K562 (cell line): ENCODE measurements at regions of chr20 and their contacts with region 1.

Region 1: DNA sequence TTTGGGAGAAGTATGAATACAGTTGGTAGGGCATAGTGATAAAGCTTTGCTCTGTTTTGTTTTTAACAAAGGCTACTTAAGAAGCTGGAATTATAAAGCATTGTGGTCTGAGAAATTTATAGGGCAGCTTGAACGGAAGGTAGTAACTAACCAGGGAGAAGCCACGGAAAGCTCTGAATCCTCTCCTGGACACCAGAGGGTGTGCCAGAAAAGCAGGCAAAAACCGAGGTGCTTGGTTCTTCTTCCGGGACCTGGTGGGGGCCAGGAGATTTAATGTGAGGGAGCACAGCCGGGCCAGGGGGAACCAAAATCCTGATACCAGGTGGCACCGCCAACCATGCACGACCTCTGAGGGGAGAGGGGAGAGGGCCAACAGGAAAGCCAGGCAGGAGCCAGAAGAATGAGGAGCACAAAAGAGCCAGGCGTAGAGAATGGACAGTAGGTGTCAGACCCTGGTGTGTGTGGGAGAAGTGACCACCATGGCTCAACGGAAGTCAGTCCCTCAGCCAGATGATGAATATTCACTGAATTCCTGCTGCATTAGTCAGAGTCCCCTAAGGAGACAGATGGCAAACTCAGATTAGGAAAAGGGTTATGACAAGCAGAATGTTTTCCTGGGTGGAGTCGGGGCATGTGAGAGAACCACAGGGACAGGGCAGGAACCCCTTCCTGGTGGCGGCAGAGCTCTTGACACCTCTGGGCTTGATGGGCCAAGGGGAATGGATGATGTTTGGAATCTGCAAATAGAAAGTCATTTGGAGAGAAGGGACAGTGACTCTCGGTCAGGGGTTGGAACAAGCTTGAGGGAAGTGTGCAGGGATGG is 262.3 kb downstream of the ZNF217 start:
- DNase-seq: peak; percentile 74 to 88 (median 79)
- ATAC-seq: peak; percentile 92
- H3K4me3 ChIP-seq: no peak overlapping the region
- H3K27ac ChIP-seq: peak overlapping the region; percentile 82
- H3K4me1 ChIP-seq: peaks cover 13 to 34% of the 10 kb centered on the region in 2 experiments
- H3K27me3 ChIP-seq: no peaks in the 10 kb centered on the region
- CTCF ChIP-seq: peak in 1 of 3 experiments; percentile 1; a peak in 2 of 6 replicates
- EP300 ChIP-seq: peak; percentile 81
- POLR2A ChIP-seq: peak; percentile 66
- RAD21 ChIP-seq: no peak; a peak in 1 of 4 replicates

Region 2: DNA sequence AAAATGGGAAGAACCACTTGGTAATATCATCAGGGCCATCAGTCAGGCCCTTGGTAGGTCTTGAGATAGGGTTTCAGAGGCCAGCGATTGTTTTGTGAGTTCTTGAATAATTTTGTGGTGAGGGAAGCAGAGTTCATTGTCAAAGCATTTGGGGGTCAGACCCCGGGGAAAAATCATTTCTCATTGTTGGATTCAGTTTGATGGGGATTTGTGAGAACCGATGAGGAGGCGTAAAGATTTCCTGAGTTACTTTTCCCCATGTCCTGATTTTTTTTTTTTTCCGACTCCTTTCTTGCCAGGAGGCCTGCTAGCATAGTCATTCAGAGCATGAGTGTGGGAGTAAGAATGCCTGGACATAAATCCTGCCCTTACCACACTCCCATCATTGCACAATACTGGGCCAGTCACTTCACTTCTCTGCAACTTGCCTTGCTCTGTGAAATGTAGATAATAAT is 298.9 kb before region 1 on chr20:
- CTCF ChIA-PET with region 1: no interaction called
- POLR2A ChIA-PET with region 1: no interaction called
- in situ Hi-C with region 1: no loop called
- intact Hi-C with region 1: no loop called
- DNase-seq: no peak
- ATAC-seq: no peak
- H3K4me3 ChIP-seq: no peak overlapping the region
- H3K27ac ChIP-seq: no peak overlapping the region
- H3K4me1 ChIP-seq: no peaks in the 10 kb centered on the region
- H3K27me3 ChIP-seq: peaks cover under 1% of the 10 kb centered on the region in 2 experiments; a peak in 4 of 5 replicates
- CTCF ChIP-seq: no peak
- EP300 ChIP-seq: no peak
- POLR2A ChIP-seq: no peak
- RAD21 ChIP-seq: no peak

Region 3: DNA sequence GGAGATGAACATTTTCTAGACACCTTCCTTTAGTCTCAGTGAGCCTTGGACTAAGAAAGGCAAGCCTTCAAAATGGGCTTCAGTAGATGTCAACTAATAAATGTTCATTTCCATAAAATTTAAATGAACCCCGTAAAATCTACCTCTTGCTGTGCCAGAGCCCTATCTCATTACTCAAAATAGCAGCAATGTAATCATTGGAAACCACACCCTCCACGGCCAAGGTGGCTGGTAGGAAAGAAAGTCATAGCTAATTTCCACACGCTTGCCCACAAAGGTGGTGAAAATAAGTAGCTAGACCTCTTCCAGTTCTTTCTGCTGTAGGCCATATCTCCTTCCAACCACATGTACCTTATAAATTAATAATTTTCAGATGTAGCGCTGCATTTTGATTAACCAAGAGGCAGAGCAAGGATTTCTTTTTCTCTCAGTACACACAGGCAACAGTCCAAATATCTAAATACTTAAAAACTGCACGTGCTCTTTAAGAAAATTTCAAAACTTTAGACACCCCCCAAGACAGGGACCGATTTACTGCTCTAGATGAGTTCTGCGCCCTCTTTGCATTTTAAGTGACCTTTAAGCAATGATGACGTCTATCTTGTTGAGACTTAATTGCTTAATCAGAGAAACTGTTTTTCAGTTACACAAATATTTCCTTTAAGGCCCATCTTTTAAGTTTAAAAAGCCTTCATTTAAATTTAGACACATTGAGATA is 28.5 kb before region 1 on chr20:
- CTCF ChIA-PET with region 1: no interaction called
- POLR2A ChIA-PET with region 1: no interaction called
- in situ Hi-C with region 1: no loop called
- intact Hi-C with region 1: loop called (anchors 2 kb)
- DNase-seq: peak in 2 of 4 experiments; percentile 30 to 58
- ATAC-seq: peak; percentile 71
- H3K4me3 ChIP-seq: no peak overlapping the region
- H3K27ac ChIP-seq: peak overlapping the region; percentile 43
- H3K4me1 ChIP-seq: peaks cover 2 to 43% of the 10 kb centered on the region in 2 experiments; a peak in 3 of 5 replicates
- H3K27me3 ChIP-seq: no peaks in the 10 kb centered on the region
- CTCF ChIP-seq: no peak
- EP300 ChIP-seq: no peak
- POLR2A ChIP-seq: no peak
- RAD21 ChIP-seq: no peak

Region 4: DNA sequence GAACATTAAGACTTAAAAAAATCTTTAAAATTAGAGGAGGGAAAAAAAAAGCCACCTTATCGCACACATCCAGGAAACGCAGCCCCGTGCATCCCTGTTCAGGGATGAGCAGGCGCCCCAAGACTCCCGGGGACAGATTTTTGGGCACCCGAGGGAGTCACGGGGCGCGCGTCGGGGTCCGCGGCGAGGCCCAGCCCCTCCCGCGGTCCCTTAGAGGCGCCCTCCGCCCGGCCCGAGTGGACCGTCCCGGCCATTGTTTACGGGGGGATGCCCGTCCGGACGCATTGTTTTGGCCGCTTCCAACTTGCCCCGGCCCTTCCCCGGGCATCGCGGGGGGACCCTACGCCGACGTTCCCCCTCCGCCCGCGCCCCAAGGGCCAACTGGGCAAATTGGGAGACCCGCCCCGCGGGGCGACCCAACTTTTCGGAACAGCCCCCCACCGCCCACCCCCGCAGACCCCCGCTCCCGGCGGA is 261.7 kb after region 1 on chr20:
- CTCF ChIA-PET with region 1: no interaction called
- POLR2A ChIA-PET with region 1: no interaction called
- in situ Hi-C with region 1: no loop called
- intact Hi-C with region 1: no loop called
- DNase-seq: peak in 1 of 4 experiments; percentile 15
- ATAC-seq: peak; percentile 4
- H3K4me3 ChIP-seq: peak overlapping the region; percentile 90
- H3K27ac ChIP-seq: peak overlapping the region; percentile 93
- H3K4me1 ChIP-seq: peaks cover 3 to 6% of the 10 kb centered on the region in 2 experiments; a peak in 3 of 5 replicates
- H3K27me3 ChIP-seq: no peaks in the 10 kb centered on the region
- CTCF ChIP-seq: no peak
- EP300 ChIP-seq: no peak
- POLR2A ChIP-seq: 0 out of 2 replicates have a peak, but pooled peaks have one; percentile 37
- RAD21 ChIP-seq: no peak

Region 5: DNA sequence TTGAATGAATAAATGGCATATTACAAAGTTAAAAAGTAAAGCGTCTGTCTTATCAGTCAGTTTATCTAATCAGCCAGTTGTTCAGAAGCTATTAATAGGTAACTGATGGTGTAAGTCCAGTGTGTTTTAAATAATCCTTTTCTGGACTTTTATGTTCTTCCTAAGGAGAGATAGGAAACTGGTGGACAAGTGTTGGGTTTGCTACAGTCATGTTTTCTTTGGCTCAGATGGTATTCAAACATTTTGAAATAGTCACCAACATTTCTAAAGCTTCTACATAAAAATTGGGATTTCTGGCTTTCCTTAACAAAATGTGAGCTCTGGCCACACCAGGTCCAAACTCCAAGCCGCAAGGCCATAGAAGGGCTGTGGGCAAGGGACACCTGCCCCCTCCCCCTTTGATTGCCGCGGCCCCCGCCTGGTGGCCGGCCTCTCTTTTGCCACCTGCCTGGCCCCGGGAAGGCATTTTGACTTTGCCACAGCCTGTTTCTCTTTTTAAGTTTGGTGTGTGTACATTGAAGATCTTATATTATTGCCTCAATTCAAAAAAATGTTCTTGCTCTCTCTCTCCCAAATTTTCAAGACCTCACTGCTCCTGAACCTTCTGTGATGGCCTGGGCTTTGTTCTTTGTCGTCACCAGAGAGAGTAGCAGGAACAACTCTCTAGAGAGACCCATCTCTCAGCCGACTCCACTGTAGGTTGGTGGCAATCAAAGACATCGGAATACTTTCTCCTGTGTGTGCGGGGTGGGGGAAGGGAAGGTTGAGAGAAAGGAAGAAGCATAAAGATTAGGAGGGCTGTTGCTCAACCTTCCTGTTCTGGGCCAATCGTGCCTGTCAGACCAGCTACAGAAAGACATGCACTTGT is 346.3 kb after region 1 on chr20:
- CTCF ChIA-PET with region 1: no interaction called
- POLR2A ChIA-PET with region 1: no interaction called
- in situ Hi-C with region 1: no loop called
- intact Hi-C with region 1: no loop called
- DNase-seq: peak; percentile 44 to 90 (median 68)
- ATAC-seq: peak; percentile 97
- H3K4me3 ChIP-seq: peak overlapping the region; percentile 9; the same call in 1 of the 2 replicates
- H3K27ac ChIP-seq: peak overlapping the region; percentile 82
- H3K4me1 ChIP-seq: peaks cover 8 to 24% of the 10 kb centered on the region in 2 experiments
- H3K27me3 ChIP-seq: no peaks in the 10 kb centered on the region
- CTCF ChIP-seq: 0 out of 6 replicates have a peak, but pooled peaks of 2 of the 3 experiments have one; percentile 20 to 21
- EP300 ChIP-seq: peak; percentile 85
- POLR2A ChIP-seq: peak; percentile 66
- RAD21 ChIP-seq: peak; percentile 30 to 53; a peak in 3 of 4 replicates